Aorta (tissue), 5 donors: ENCODE measurements at regions of chr1 and their contacts with region 1.

Region 1: DNA sequence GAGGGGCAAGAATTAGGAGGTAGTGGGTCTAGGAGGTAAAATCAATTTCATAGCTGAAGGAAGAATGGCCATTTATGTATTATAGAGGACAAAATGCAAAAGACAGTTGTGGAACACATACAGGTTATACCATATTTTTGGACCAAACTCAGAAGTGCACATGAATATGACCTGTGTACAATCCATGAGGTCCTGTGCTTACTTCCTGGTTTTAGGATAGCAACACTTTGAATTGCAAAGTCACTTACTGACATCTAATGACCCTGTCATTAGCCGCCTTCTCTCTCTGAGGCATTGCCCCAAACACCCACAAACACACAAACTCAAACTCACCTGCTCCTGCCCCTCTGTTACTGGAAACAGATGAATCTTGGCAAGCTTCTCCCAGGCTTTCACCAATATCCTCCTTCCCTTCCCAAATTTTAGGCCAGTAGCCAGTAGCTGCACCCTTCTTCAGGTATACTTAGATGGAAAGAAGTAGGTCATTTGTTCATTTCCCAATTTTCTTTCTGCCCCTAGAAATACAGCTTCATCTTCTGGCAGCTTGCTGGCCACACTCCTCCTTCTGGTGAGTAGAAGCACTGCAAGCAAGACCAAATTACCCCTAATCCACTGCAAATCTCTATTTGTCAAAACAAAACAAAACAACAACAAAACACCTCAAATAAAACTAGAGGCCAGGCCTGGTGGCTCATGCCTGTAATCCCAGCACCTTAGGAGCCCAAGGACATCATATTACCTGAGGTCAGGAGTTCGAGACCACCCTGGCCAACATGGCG is 13.7 kb upstream of the RPL5 start:
- DNase-seq: no peak
- ATAC-seq: no peak
- H3K4me3 ChIP-seq: no peak overlapping the region
- H3K27ac ChIP-seq: no peak overlapping the region
- H3K4me1 ChIP-seq: no peaks in the 10 kb centered on the region
- H3K27me3 ChIP-seq: no peaks in the 10 kb centered on the region

Region 2: DNA sequence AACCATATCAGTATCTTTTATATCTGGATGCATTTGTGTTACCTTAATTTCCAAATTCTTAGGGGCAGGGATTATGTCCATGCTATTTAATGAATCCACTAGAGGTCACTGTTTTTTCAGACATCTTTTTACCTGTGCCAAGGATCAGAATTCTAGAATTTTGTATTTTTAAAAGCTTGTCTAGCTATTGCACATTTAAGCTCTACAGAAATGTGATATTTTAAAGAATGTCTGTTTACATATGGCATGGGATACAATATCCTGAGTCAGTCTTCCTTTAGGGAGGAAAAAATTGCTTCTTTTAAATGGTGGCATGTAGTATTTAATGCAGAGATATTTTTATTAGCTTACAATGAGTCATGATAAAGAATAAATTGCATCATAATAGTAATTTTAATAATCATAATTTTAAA is 508.0 kb before region 1 on chr1:
- intact Hi-C with region 1: loop called in 1 of 2 experiments (anchors 10 kb)
- DNase-seq: no peak
- ATAC-seq: no peak
- H3K4me3 ChIP-seq: no peak overlapping the region
- H3K27ac ChIP-seq: no peak overlapping the region
- H3K4me1 ChIP-seq: no peaks in the 10 kb centered on the region
- H3K27me3 ChIP-seq: no peaks in the 10 kb centered on the region

Region 3: GRCh38 chr1:92424381-92424780 is 393.8 kb before region 1 on chr1:
- intact Hi-C with region 1: no loop called
- DNase-seq: no peak
- ATAC-seq: no peak
- H3K4me3 ChIP-seq: no peak overlapping the region
- H3K27ac ChIP-seq: no peak overlapping the region
- H3K4me1 ChIP-seq: no peaks in the 10 kb centered on the region
- H3K27me3 ChIP-seq: no peaks in the 10 kb centered on the region

Region 4: DNA sequence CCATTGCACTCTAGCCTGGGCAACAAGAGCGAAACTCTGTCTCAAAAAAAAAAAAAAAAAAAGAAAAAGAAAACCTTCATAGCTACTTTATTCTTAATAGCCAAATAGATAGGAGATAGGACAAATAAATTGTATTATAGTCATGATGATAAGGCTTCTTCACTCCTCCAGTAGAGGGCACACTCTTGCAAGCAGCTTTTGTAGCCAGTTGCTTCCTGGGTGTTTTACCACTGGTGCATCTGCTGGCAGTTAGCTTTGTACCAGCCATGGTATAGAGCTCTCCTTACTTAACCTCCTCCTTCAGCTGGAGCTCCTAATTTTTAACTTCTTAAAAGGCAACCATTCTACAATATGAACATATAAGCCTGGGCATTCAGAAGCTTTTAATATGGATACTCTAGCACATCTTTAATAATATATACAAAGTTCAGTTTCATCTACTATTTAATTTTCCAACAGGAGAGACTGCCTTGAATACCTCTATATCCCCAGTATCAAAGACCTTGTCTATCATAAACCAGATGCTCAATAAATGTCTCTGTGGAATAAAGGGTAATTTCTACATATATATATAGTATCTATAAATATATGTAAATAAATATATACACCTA is 69.0 kb before region 1 on chr1:
- intact Hi-C with region 1: loop called (anchors 2 to 5 kb)
- DNase-seq: no peak
- ATAC-seq: no peak
- H3K4me3 ChIP-seq: no peak overlapping the region
- H3K27ac ChIP-seq: no peak overlapping the region
- H3K4me1 ChIP-seq: no peaks in the 10 kb centered on the region
- H3K27me3 ChIP-seq: no peaks in the 10 kb centered on the region

Region 5: GRCh38 chr1:92759361-92759760 is 58.8 kb before region 1 on chr1:
- intact Hi-C with region 1: no loop called
- DNase-seq: no peak
- ATAC-seq: no peak
- H3K4me3 ChIP-seq: no peak overlapping the region
- H3K27ac ChIP-seq: no peak overlapping the region
- H3K4me1 ChIP-seq: no peaks in the 10 kb centered on the region
- H3K27me3 ChIP-seq: no peaks in the 10 kb centered on the region